ENCODE measurements at regions of chr13 and their contacts with region 1.

Region 1: DNA sequence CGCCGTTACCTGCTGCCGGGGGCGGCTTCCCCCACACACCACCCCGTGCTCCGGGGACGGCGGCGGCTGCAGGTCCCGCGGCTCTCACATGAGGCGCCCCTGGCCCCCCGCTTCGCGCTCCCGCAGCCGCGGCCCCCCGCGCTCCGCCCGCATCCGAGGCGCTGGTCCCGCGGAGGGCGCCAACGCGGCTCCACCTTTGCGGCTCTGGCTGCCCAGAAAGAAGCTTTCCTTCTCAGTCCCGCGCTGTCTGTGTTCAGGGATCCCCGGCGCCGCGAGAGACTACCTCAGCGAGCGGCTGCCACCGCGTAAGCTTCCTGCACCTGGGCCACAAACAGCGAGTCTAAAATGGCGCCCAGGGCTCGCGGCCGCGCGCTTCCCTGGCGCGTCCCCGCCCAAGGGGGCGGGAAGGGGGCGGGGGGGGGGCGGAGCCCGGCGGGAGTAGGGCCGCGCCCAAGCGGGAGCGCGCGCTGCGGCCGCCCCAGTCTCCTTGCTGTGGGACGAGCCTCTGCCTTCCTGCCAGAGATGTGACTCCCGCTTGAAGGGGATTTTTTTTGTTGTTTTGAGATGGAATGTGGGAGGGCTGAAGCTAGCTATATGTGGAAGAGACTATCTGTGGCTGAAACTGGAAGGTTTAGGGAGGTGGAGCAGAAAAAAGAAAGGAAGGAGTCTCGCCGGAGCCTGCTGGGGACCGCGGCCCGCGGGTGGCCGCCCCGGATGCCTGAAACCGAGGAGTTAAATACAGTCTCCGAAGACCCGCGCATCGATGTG is at the start of gene FBXL3:
- DNase-seq: peak; percentile 91
- ATAC-seq: peak; percentile 64
- H3K4me3 ChIP-seq: peak within 1 kb of the TSS; percentile 66 to 91 (median 88)
- H3K4me3 Mint-ChIP-seq: peak within 1 kb of the TSS; percentile 99
- H3K27ac ChIP-seq: peak within 1 kb of the TSS; percentile 84 to 95
- H3K27ac Mint-ChIP-seq: peak within 1 kb of the TSS; percentile 98
- H3K4me1 ChIP-seq: peaks cover 26 to 42% of the 10 kb centered on the region in 2 donors
- H3K4me1 Mint-ChIP-seq: peaks cover 49% of the 10 kb centered on the region
- H3K27me3 ChIP-seq: no peaks in the 10 kb centered on the region
- H3K27me3 Mint-ChIP-seq: no peaks in the 10 kb centered on the region
- CTCF ChIP-seq: no peak
- total RNA-seq, gene FBXL3: 78.0 and 79.5 TPM in 2 replicates

Region 2: DNA sequence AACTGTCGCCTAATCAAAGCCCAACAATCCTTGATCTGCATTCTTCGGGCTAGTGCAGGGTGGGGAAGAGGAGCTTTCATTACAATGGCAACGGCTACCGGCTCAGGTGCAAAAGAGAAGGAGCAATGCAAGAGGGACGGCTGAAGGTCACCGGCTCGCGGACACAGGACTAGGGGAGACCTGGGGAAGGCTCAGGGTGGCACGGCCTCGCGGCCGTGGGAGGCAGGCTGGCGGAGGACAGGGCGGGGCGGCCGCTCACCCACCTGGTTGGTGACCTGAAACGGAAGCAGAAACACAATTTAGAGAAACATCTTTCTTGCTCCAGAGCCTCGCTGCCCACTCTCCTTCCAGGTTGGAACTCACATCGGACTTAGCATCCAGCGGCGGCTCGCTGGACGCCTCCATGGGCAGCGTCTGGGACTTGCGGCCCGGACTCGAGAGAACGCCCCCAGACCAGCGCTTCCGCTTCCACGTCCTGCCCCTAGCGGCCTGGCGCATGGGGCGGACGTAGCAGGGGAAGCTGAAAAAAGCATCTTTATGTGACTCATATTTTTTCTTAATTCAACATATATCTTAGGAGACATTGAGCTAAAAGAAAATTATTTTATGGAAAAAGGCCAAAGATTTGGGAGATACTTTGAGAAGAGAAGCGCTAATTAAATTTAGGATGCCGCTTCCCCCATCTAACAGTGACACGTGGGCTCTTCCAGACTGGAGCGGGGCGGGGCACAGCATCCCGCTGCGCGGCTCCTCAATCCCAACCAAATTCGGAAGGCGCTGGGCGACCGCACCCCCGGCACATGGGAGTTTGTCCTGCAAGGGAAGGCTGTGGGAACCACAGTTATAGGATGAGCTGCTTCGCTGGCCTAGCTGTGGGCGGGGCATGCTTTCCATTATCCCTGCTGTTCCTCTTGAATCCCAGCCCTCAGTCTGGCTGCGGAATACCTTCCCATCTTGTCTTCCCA is 1489.3 kb before region 1 on chr13 and contains the start of gene COMMD6:
- CTCF ChIA-PET with region 1: no interaction called
- POLR2A ChIA-PET with region 1: no interaction called
- intact Hi-C with region 1: loop called (anchors 5 kb)
- DNase-seq: peak; percentile 86
- ATAC-seq: peak; percentile 94
- H3K4me3 ChIP-seq: peak within 1 kb of the TSS; percentile 70 to 92 (median 86)
- H3K4me3 Mint-ChIP-seq: peak within 1 kb of the TSS; percentile 100
- H3K27ac ChIP-seq: peak within 1 kb of the TSS; percentile 56 to 75
- H3K27ac Mint-ChIP-seq: peak within 1 kb of the TSS; percentile 97
- H3K4me1 ChIP-seq: peaks cover 12 to 22% of the 10 kb centered on the region in 2 donors
- H3K4me1 Mint-ChIP-seq: peaks cover 43% of the 10 kb centered on the region
- H3K27me3 ChIP-seq: no peaks in the 10 kb centered on the region
- H3K27me3 Mint-ChIP-seq: no peaks in the 10 kb centered on the region
- CTCF ChIP-seq: peak; percentile 46
- total RNA-seq, gene COMMD6: 152 and 153 TPM in 2 replicates

Region 3: DNA sequence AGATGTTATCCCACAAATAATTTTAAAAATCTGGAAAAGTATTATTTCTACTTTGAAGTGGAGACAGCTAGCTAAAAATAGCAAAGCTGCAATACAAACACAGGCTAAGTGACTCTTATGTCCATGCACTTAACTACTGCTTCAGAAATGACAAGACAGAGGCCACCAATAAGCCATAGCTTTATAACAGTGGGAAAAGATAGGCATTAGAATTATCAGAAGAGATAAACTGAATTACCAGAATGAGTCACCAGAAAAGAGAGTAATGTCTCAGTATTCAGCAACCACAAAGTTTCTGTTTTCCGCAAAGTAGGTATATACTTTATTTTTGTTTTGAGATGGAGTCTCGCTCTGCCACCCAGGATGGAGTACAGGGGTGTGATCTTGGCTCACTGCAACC is 18.0 kb before region 1 on chr13:
- CTCF ChIA-PET with region 1: interaction called, 4 read pairs
- POLR2A ChIA-PET with region 1: interaction called, 4 read pairs
- intact Hi-C with region 1: loop called (anchors 2 kb)
- DNase-seq: no peak
- ATAC-seq: no peak
- H3K4me3 ChIP-seq: no peak overlapping the region
- H3K4me3 Mint-ChIP-seq: no peak overlapping the region
- H3K27ac ChIP-seq: no peak overlapping the region
- H3K27ac Mint-ChIP-seq: no peak overlapping the region
- H3K4me1 ChIP-seq: no peaks in the 10 kb centered on the region
- H3K4me1 Mint-ChIP-seq: peaks cover 13% of the 10 kb centered on the region
- H3K27me3 ChIP-seq: no peaks in the 10 kb centered on the region
- H3K27me3 Mint-ChIP-seq: no peaks in the 10 kb centered on the region
- CTCF ChIP-seq: no peak